K562 (cell line): ENCODE measurements at regions of chr17 and their contacts with region 1.

Region 1: GRCh38 chr17:76121932-76122430 is 18.4 kb upstream of the EXOC7 start:
- DNase-seq: peak in 1 of 4 experiments; percentile 18
- ATAC-seq: no peak
- H3K4me3 ChIP-seq: no peak overlapping the region
- H3K27ac ChIP-seq: 0 out of 3 replicates have a peak overlapping the region, but pooled peaks have one; percentile 33
- H3K4me1 ChIP-seq: peaks cover 5 to 21% of the 10 kb centered on the region in 2 experiments; a peak in 4 of 5 replicates
- H3K27me3 ChIP-seq: no peaks in the 10 kb centered on the region
- CTCF ChIP-seq: no peak
- EP300 ChIP-seq: no peak
- POLR2A ChIP-seq: no peak
- RAD21 ChIP-seq: no peak

Region 2: DNA sequence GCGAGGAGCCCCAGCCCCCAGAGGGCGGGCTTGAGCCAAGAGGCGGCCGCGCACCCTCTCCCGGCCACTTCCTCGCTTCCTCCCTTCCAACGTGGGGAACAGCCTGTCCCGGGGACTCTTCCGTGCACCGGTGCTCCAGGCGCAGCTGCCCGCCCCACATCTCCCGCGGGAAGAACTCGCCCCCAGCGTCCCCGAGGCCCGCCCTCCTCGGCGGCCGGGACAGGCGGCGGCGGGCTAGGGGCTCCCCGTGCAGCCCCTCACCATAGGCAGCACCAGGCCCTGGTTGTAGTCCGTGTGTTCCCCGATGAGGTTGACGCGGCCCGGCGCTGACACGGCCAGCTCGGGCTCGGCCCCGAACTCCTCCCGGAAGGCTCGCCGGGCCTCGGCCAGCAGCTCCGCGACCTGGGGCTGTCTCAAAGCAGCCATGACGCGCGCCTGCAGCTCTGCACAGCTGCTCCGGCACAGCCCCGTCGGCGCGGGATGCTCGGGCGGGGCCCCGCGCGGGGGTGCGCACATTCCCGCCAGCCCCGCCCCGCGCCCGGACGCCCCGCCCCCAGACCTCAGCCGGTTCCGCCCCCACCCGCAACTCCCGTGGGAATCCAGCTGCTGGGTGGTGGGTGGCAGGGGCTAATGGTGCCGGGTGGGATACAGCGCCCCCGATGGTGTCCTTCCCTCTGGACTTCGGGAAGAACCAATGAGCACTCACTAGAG is 357.1 kb before region 1 on chr17 and contains the start of gene GALK1:
- CTCF ChIA-PET with region 1: no interaction called
- POLR2A ChIA-PET with region 1: no interaction called
- in situ Hi-C with region 1: no loop called
- intact Hi-C with region 1: no loop called
- DNase-seq: peak; percentile 85 to 92 (median 90)
- ATAC-seq: peak; percentile 95
- H3K4me3 ChIP-seq: peak within 1 kb of the TSS; percentile 74
- H3K27ac ChIP-seq: peak within 1 kb of the TSS; percentile 59
- H3K4me1 ChIP-seq: peaks cover 12 to 38% of the 10 kb centered on the region in 2 experiments
- H3K27me3 ChIP-seq: no peaks in the 10 kb centered on the region
- CTCF ChIP-seq: peak; percentile 82 to 96 (median 92); a peak in 5 of 6 replicates
- EP300 ChIP-seq: no peak
- POLR2A ChIP-seq: peak; percentile 65
- RAD21 ChIP-seq: peak; percentile 78 to 86
- polyA plus RNA-seq, gene GALK1: 0.45 to 2.1 TPM

Region 3: GRCh38 chr17:76014184-76014924 is 107.6 kb before region 1 on chr17:
- CTCF ChIA-PET with region 1: interaction called, 3 read pairs
- POLR2A ChIA-PET with region 1: no interaction called
- in situ Hi-C with region 1: no loop called
- intact Hi-C with region 1: loop called (anchors 5 kb)
- DNase-seq: peak; percentile 84 to 90 (median 88)
- ATAC-seq: peak; percentile 97
- H3K4me3 ChIP-seq: no peak overlapping the region
- H3K27ac ChIP-seq: no peak overlapping the region
- H3K4me1 ChIP-seq: peaks cover 0 to 49% of the 10 kb centered on the region in 2 experiments; a peak in 3 of 5 replicates
- H3K27me3 ChIP-seq: peaks cover 32 to 72% of the 10 kb centered on the region in 2 experiments; a peak in 4 of 5 replicates
- CTCF ChIP-seq: peak; percentile 94 to 96 (median 94)
- EP300 ChIP-seq: no peak
- POLR2A ChIP-seq: no peak
- RAD21 ChIP-seq: peak; percentile 79 to 96

Region 4: GRCh38 chr17:76147211-76148014 is 25.4 kb after region 1 on chr17:
- CTCF ChIA-PET with region 1: interaction called, 12 read pairs
- POLR2A ChIA-PET with region 1: interaction called, 3 read pairs
- in situ Hi-C with region 1: no loop called
- intact Hi-C with region 1: no loop called
- DNase-seq: no peak
- ATAC-seq: 0 out of 3 replicates have a peak, but pooled peaks have one; percentile 19
- H3K4me3 ChIP-seq: no peak overlapping the region
- H3K27ac ChIP-seq: no peak overlapping the region
- H3K4me1 ChIP-seq: 0 out of 5 replicates have a peak, but pooled peaks cover 0 to 3% of the 10 kb centered on the region in 2 experiments
- H3K27me3 ChIP-seq: no peaks in the 10 kb centered on the region
- CTCF ChIP-seq: peak; percentile 11 to 53 (median 49); a peak in 4 of 6 replicates
- EP300 ChIP-seq: no peak
- POLR2A ChIP-seq: no peak
- RAD21 ChIP-seq: no peak; a peak in 1 of 4 replicates

Region 5: DNA sequence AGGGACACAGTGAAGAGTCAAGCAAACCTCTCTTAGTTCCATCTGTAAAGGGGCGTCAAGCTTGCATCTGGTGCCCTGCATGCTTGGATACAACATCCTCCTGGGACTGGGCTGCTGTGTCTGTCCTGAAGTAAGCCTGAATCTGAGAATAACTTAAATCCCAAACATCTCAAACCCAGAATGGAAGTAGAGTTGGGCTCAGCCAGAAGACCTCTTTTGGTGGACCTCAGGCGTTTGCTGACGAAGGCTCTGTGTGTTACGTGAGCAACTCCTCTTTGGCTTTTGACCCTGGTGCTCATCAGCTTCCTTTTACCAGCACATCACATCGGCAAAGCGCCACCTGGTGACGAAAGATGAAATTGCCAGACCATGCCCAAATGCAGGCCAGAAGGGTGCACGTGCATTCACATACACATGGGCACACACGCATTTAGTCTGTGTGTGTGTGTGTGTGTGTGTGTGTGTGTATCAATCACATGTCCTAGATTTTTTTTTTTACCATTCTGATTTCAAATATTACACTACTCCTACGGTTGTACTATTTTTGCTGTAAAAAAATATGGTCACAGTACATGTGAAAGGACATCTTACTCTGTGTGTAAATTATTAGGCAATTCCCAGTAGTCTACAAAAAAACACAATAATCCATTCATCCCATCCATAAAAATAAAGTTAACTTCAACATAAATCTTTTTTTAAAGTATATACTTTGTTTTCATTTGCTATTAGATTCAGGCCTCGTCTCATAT is 60.2 kb after region 1 on chr17:
- CTCF ChIA-PET with region 1: interaction called, 6 read pairs
- POLR2A ChIA-PET with region 1: interaction called, 5 read pairs
- in situ Hi-C with region 1: no loop called
- intact Hi-C with region 1: loop called (anchors 5 kb)
- DNase-seq: peak; percentile 81 to 91 (median 84)
- ATAC-seq: peak; percentile 88
- H3K4me3 ChIP-seq: no peak overlapping the region
- H3K27ac ChIP-seq: no peak overlapping the region
- H3K4me1 ChIP-seq: peaks cover 7 to 27% of the 10 kb centered on the region in 2 experiments; a peak in 3 of 5 replicates
- H3K27me3 ChIP-seq: no peaks in the 10 kb centered on the region
- CTCF ChIP-seq: peak; percentile 80 to 93 (median 86)
- EP300 ChIP-seq: no peak
- POLR2A ChIP-seq: no peak
- RAD21 ChIP-seq: peak; percentile 63 to 83

Region 6: GRCh38 chr17:76278952-76279741 is 157.2 kb after region 1 on chr17:
- CTCF ChIA-PET with region 1: interaction called, 89 read pairs
- POLR2A ChIA-PET with region 1: interaction called, 157 read pairs
- in situ Hi-C with region 1: no loop called
- intact Hi-C with region 1: loop called (anchors 1 kb)
- DNase-seq: peak; percentile 87 to 94 (median 90)
- ATAC-seq: peak; percentile 97
- H3K4me3 ChIP-seq: no peak overlapping the region
- H3K27ac ChIP-seq: no peak overlapping the region
- H3K4me1 ChIP-seq: peaks cover 12 to 75% of the 10 kb centered on the region in 2 experiments; a peak in 4 of 5 replicates
- H3K27me3 ChIP-seq: no peaks in the 10 kb centered on the region
- CTCF ChIP-seq: peak; percentile 96 to 97 (median 96)
- EP300 ChIP-seq: no peak
- POLR2A ChIP-seq: no peak
- RAD21 ChIP-seq: peak; percentile 98 to 100

Region 7: GRCh38 chr17:76296186-76296585 is 174.2 kb after region 1 on chr17:
- CTCF ChIA-PET with region 1: interaction called, 9 read pairs
- POLR2A ChIA-PET with region 1: no interaction called
- in situ Hi-C with region 1: loop called (anchors 5 kb)
- intact Hi-C with region 1: loop called (anchors 5 kb)
- DNase-seq: no peak
- ATAC-seq: no peak
- H3K4me3 ChIP-seq: no peak overlapping the region
- H3K27ac ChIP-seq: no peak overlapping the region
- H3K4me1 ChIP-seq: no peaks in the 10 kb centered on the region
- H3K27me3 ChIP-seq: no peaks in the 10 kb centered on the region
- CTCF ChIP-seq: no peak
- EP300 ChIP-seq: no peak
- POLR2A ChIP-seq: no peak
- RAD21 ChIP-seq: no peak